PC-3 (cell line): ENCODE measurements at regions of chr1 and their contacts with region 1.

Region 1: DNA sequence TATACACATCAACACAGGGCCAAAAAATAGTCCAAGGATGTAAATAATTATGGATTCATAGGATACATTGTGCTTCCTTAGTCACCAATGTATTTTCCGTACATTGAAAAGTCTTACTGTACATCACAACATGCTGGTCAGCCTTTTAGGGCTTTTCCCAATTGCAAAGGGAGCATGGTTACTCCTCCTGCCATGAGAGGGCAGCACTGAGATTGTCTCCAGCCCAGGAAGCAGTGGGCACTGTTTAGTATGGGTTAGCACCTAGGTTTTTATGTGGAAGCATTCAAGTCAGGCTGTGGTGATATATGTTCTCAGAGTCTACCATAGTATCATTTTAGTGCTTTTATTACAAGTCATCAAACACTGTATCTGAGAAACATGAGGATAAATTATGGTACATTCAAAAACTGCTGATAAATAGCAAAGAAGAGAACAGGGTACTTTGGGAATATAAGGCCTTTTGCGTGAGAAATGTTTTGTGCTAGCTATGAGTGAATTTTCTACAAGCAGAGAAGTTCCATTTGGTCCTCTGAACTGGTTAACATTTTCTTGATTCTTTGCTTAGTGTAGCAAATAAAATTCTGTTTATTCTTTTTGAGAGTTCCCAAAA is 34.0 kb downstream of the ST6GALNAC5 start:
- DNase-seq: peak; percentile 76
- ATAC-seq: peak; percentile 88
- H3K4me3 ChIP-seq: no peak overlapping the region
- H3K27ac ChIP-seq: no peak overlapping the region
- H3K4me1 ChIP-seq: no peaks in the 10 kb centered on the region
- H3K27me3 ChIP-seq: no peaks in the 10 kb centered on the region
- CTCF ChIP-seq: peak; percentile 95

Region 2: GRCh38 chr1:76154206-76154956 is 746.9 kb before region 1 on chr1:
- CTCF ChIA-PET with region 1: no interaction called
- POLR2A ChIA-PET with region 1: no interaction called
- intact Hi-C with region 1: loop called (anchors 10 kb)
- DNase-seq: peak; percentile 80
- ATAC-seq: peak; percentile 96
- H3K4me3 ChIP-seq: peak overlapping the region; percentile 65
- H3K27ac ChIP-seq: no peak overlapping the region
- H3K4me1 ChIP-seq: peaks cover 5% of the 10 kb centered on the region; the same call in 1 of the 2 replicates
- H3K27me3 ChIP-seq: peaks cover 40% of the 10 kb centered on the region
- CTCF ChIP-seq: peak; percentile 96

Region 3: GRCh38 chr1:76330991-76331603 is 570.2 kb before region 1 on chr1:
- CTCF ChIA-PET with region 1: no interaction called
- POLR2A ChIA-PET with region 1: no interaction called
- intact Hi-C with region 1: loop called (anchors 10 kb)
- DNase-seq: peak; percentile 78
- ATAC-seq: peak; percentile 78
- H3K4me3 ChIP-seq: no peak overlapping the region
- H3K27ac ChIP-seq: no peak overlapping the region
- H3K4me1 ChIP-seq: no peaks in the 10 kb centered on the region
- H3K27me3 ChIP-seq: no peaks in the 10 kb centered on the region
- CTCF ChIP-seq: peak; percentile 94

Region 4: GRCh38 chr1:76725864-76726619 is 175.2 kb before region 1 on chr1:
- CTCF ChIA-PET with region 1: no interaction called
- POLR2A ChIA-PET with region 1: no interaction called
- intact Hi-C with region 1: no loop called
- DNase-seq: no peak
- ATAC-seq: no peak
- H3K4me3 ChIP-seq: no peak overlapping the region
- H3K27ac ChIP-seq: no peak overlapping the region
- H3K4me1 ChIP-seq: no peaks in the 10 kb centered on the region
- H3K27me3 ChIP-seq: peaks cover 43% of the 10 kb centered on the region; the same call in 1 of the 2 replicates
- CTCF ChIP-seq: no peak

Region 5: DNA sequence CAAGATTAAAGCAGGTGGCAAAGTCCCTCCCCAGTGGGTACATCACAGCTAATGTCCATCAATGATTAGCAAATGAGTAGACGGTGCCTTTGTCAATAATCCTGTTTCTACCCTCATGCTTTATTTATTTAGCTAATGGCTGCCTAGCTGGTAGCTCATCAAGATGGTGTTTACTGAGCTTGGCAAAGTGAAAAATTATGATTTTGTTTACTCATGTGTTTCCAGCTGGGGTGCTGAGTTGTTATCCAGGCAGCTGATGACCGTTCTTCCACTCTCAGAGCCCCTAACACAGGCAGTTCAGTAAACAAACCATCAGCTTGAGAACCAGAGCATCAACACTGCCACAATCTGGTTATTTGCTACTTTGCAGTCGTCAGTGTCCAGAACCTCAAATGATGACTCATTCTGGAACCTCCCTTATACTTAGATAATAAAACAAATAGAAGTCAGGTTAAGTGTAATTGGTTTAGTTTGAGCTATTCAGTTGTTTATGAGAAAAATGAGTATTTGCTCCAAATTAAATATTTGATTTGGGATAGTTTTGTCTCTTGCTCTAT is 129.9 kb after region 1 on chr1:
- CTCF ChIA-PET with region 1: interaction called, 6 read pairs
- POLR2A ChIA-PET with region 1: no interaction called
- intact Hi-C with region 1: loop called (anchors 1 kb)
- DNase-seq: peak; percentile 87
- ATAC-seq: peak; percentile 89
- H3K4me3 ChIP-seq: no peak overlapping the region
- H3K27ac ChIP-seq: peak overlapping the region; percentile 74
- H3K4me1 ChIP-seq: peaks cover 20% of the 10 kb centered on the region
- H3K27me3 ChIP-seq: no peaks in the 10 kb centered on the region
- CTCF ChIP-seq: peak; percentile 62